ENCODE measurements at regions of chr5 and their contacts with region 1.

Region 1: DNA sequence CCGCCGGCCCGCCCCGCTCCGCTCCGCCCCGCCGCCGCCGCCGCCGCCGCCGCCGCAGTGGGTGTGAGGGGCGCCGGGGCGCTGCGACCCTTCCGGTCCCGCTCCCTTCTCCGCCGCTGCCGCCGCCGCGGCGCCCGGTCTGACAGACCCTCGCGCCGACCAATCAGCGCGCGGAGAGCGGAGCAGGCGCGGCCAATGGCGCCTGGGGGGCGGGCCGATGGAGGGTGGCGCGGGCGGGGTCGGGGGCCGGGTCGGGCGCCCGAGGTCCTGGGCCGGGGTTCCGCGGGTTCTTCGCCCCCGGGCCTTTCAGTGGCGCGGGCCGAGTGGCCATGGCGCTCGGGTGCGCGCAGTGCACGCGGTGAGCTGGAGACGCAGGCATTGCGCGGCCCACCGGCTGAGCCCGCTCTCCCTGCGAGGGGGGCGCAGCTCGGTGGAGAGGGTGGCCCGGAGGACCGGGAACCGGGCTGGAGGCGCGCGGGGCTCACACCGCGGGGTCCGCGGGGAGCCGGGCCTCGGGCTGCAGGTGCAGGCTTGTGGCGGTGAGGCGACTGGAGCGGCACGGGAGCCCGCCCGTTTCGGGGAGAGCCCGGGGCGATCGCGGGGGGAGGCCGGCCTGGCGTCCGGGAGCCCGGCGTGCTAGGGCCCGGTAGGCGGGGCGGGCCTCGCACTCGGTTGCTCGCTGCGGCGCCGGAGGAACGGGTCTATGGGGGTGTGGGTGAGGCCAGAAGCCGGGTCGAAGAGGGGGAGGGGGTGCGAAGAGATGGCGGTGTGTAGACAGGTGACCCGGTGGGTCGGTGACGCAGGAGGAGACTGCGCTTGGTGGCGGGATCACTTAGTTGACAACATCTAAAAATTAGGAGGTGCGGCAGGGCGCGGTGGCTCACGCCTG is at the start of gene MAPK9:
- DNase-seq: peak; percentile 63 to 95
- H3K4me3 ChIP-seq: peak within 1 kb of the TSS; percentile 97
- CTCF ChIP-seq: no peak
- POLR2A ChIP-seq: no peak
- total RNA-seq, gene MAPK9: 10.4 to 18.4 (median 15.4) TPM

Region 2: GRCh38 chr5:180271221-180271620 is 21.0 kb before region 1 on chr5:
- intact Hi-C with region 1: no loop called
- DNase-seq: no peak
- H3K4me3 ChIP-seq: no peak overlapping the region
- CTCF ChIP-seq: no peak
- POLR2A ChIP-seq: no peak

Region 3: GRCh38 chr5:180470966-180471582 is 178.9 kb after region 1 on chr5:
- intact Hi-C with region 1: loop called (anchors 10 kb)
- DNase-seq: peak; percentile 36 to 88
- H3K4me3 ChIP-seq: no peak overlapping the region
- CTCF ChIP-seq: peak in 1 of 3 donors; percentile 56
- POLR2A ChIP-seq: no peak